ENCODE measurements at regions of chr13 and their contacts with region 1.

Region 1: GRCh38 chr13:51452361-51453206 is at the start of gene INTS6:
- DNase-seq: peak; percentile 97
- ATAC-seq: peak; percentile 74
- H3K4me3 Mint-ChIP-seq: peak within 1 kb of the TSS; percentile 91
- H3K27ac Mint-ChIP-seq: peak within 1 kb of the TSS; percentile 98
- H3K4me1 Mint-ChIP-seq: peaks cover 39% of the 10 kb centered on the region
- H3K27me3 Mint-ChIP-seq: no peaks in the 10 kb centered on the region
- CTCF ChIP-seq: no peak
- total RNA-seq, gene INTS6: 55.3 and 68.7 TPM in 2 replicates

Region 2: DNA sequence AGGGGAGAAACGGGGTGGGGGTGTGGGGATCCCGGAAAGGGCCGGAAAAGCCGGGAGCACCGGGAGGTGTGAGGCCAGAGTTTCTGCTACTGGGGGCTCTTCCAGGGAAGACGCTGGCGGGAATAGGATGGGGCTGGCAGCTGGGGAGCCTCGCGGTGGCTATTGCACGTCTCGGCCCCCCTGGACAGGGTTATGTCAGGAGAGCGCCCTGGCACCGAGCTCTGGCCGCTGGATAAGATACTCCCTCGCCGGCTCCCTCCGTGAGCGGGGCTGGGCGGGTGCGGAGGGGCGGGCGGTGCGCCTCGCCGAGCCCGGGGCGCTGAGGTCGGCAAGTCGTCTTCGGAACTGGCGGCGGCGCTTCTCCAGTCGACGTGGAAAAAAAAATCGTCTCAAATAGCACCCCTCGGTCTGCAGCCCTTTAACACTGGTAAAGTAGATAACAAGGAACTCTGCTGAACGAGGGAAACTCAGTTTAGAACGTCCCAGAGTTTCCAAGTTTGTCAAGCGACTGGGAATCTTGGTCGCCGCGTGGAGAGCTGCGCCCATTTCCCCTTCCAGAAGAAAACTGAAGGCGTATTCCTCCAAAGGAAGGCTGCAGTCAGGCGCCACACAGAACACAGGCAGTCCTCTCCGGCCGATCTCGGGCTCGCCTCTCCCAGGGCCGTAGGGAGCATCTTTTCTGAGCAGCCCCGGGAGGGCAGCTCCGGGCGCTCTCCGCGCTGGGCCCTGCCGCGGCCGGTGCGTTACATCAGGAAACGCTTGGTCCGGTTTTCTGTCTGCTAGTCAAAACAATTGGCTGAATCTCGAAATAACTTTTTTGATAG is 1322.2 kb before region 1 on chr13:
- CTCF ChIA-PET with region 1: no interaction called
- POLR2A ChIA-PET with region 1: interaction called, 3 read pairs
- intact Hi-C with region 1: loop called (anchors 2 kb)
- DNase-seq: peak; percentile 54
- ATAC-seq: peak; percentile 36
- H3K4me3 Mint-ChIP-seq: peak overlapping the region; percentile 89
- H3K27ac Mint-ChIP-seq: peak overlapping the region; percentile 95
- H3K4me1 Mint-ChIP-seq: peaks cover 60% of the 10 kb centered on the region
- H3K27me3 Mint-ChIP-seq: peaks cover 16% of the 10 kb centered on the region
- CTCF ChIP-seq: no peak

Region 3: GRCh38 chr13:51502153-51502651 is 49.6 kb after region 1 on chr13:
- CTCF ChIA-PET with region 1: no interaction called
- POLR2A ChIA-PET with region 1: interaction called, 7 read pairs
- intact Hi-C with region 1: loop called (anchors 1 kb)
- DNase-seq: no peak
- ATAC-seq: peak; percentile 74
- H3K4me3 Mint-ChIP-seq: no peak overlapping the region
- H3K27ac Mint-ChIP-seq: peak overlapping the region; percentile 61
- H3K4me1 Mint-ChIP-seq: peaks cover 15% of the 10 kb centered on the region
- H3K27me3 Mint-ChIP-seq: no peaks in the 10 kb centered on the region
- CTCF ChIP-seq: no peak

Region 4: DNA sequence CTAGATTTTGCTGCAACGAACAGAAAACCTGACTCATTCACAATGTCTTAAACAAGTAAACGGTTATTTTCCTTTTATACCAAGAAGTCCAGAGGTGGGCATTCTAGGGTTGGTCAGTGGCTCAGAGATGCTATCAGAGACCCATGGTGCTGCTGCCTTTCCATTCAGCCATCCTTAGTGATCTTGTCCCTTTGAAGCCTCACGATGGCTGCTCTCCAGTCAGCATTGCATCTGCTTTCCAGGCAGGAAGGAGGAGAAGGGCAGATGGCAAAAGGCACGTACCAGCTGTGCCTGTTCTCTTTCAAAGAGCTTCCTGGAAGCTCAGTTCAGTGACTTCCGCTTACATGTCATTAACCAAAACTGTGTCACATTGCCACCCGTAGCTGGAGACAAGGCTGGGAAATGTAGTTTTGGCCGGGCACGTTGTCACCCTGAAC is 161.8 kb after region 1 on chr13:
- CTCF ChIA-PET with region 1: no interaction called
- POLR2A ChIA-PET with region 1: interaction called, 114 read pairs
- intact Hi-C with region 1: loop called (anchors 1 kb)
- DNase-seq: no peak
- ATAC-seq: peak; percentile 86
- H3K4me3 Mint-ChIP-seq: peak overlapping the region; percentile 90
- H3K27ac Mint-ChIP-seq: peak overlapping the region; percentile 97
- H3K4me1 Mint-ChIP-seq: peaks cover 58% of the 10 kb centered on the region
- H3K27me3 Mint-ChIP-seq: no peaks in the 10 kb centered on the region
- CTCF ChIP-seq: no peak

Region 5: GRCh38 chr13:51803422-51804294 is 351.1 kb after region 1 on chr13 and contains the start of gene DHRS12:
- CTCF ChIA-PET with region 1: interaction called, 4 read pairs
- POLR2A ChIA-PET with region 1: interaction called, 85 read pairs
- intact Hi-C with region 1: loop called (anchors 1 kb)
- DNase-seq: peak; percentile 84
- ATAC-seq: peak; percentile 81
- H3K4me3 Mint-ChIP-seq: peak within 1 kb of the TSS; percentile 92
- H3K27ac Mint-ChIP-seq: peak within 1 kb of the TSS; percentile 99
- H3K4me1 Mint-ChIP-seq: peaks cover 47% of the 10 kb centered on the region
- H3K27me3 Mint-ChIP-seq: no peaks in the 10 kb centered on the region
- CTCF ChIP-seq: no peak
- total RNA-seq, gene DHRS12: 11.6 and 14.1 TPM in 2 replicates

Region 6: DNA sequence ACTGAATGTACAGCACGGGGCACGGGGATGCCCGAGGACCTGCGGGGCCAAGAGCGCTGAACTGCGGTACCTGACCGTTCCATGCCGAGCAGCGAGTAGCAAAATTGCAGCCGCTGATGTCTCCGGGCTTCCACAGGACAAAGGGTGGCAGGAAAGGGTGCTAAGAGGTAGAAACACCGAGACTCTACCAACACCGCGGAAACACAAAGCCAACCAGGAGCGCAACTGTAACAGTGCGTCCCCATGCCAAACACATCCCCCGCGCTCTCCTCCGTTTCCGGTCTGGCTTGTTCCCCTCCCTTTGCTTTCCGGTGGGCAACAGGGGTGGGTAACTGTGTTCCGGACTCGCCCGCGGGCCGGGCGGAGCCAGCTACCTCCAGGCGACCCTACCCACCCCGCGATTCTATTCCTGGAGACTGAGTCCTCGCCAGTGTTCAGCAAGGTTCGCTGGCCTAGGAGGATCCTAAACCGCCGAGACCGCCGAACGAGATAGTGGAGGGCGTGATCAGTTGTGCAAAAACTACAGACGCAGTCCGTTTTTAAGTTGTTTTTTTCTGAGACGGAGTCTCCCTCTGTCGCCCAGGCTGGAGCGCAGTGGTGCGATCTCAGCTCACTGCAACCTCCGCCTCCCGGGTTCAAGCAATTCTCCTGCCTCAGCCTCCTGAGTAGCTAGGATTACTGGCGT is 741.7 kb after region 1 on chr13:
- CTCF ChIA-PET with region 1: no interaction called
- POLR2A ChIA-PET with region 1: interaction called, 6 read pairs
- intact Hi-C with region 1: loop called (anchors 1 kb)
- DNase-seq: peak; percentile 90
- ATAC-seq: peak; percentile 86
- H3K4me3 Mint-ChIP-seq: peak overlapping the region; percentile 99
- H3K27ac Mint-ChIP-seq: peak overlapping the region; percentile 98
- H3K4me1 Mint-ChIP-seq: peaks cover 31% of the 10 kb centered on the region
- H3K27me3 Mint-ChIP-seq: no peaks in the 10 kb centered on the region
- CTCF ChIP-seq: no peak

Measured in activated B cell treated with CpG ODN at 0.5 μM for 24 hours (primary cell).